PC-9 (cell line): ENCODE measurements at regions of chrX and their contacts with region 1.

Region 1: GRCh38 chrX:130916636-130917422 is 13.8 kb upstream of the ENOX2 start:
- DNase-seq: peak; percentile 17 to 38
- H3K4me3 ChIP-seq: no peak overlapping the region
- H3K27ac ChIP-seq: no peak overlapping the region
- H3K4me1 ChIP-seq: no peaks in the 10 kb centered on the region
- H3K27me3 ChIP-seq: 0 out of 2 replicates have a peak, but pooled peaks cover 6% of the 10 kb centered on the region
- CTCF ChIP-seq: peak; percentile 96

Region 2: DNA sequence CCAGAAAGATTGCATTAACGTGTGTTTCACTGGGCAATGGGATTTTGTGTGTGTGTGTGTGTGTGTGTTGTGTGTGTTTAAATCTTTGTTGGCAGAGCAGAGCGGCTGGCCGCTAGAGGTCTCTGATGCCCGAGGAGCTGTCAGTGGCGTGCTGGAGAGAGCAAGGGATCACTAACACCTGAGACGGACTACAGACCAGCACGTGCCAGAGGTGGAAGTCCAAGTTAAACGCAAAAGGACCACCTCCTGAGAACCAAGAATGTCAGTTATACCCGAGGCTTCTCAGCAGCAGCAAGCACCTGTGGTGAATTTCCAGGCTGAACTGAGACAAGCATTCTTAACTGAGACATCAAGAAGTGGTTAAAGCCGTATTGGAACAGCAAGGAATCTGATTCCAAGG is 586.1 kb before region 1 on chrX:
- CTCF ChIA-PET with region 1: interaction called, 4 read pairs
- POLR2A ChIA-PET with region 1: no interaction called
- intact Hi-C with region 1: loop called (anchors 2 kb)
- DNase-seq: peak; percentile 43 to 48
- H3K4me3 ChIP-seq: peak overlapping the region; percentile 36; the same call in 1 of the 2 replicates
- H3K27ac ChIP-seq: no peak overlapping the region
- H3K4me1 ChIP-seq: peaks cover 14% of the 10 kb centered on the region
- H3K27me3 ChIP-seq: no peaks in the 10 kb centered on the region
- CTCF ChIP-seq: peak; percentile 77

Region 3: DNA sequence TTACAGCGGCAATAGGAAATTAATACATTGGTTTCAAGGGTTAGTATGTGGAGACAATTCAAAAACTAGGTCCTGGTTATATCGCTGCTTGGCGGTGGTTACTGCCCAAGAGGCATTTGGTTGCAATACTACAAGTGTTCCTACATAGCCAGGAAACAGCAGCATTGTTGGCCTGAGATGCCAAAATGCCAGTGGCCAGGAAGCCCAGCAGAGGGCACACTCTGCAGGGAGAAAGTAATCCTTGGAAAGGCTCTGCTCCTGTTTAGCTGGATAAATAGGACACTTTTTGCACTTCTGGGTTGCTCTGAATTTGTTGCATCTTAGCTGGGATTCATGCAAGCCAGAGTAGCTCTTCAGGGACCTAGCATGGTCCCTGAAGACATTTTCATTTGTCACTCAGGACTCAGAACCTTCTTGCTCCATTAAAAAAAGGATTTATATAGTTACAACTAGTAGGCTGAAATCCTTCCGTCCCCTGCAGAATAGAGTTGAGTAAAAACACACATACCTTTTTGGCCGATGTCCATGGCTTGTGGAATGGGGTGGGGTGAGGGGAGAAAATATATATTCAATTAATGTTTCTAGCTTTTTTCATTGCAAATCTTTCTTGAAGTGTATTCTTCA is 523.3 kb before region 1 on chrX:
- CTCF ChIA-PET with region 1: interaction called, 4 read pairs
- POLR2A ChIA-PET with region 1: no interaction called
- intact Hi-C with region 1: loop called (anchors 1 kb)
- DNase-seq: peak; percentile 52 to 61
- H3K4me3 ChIP-seq: no peak overlapping the region
- H3K27ac ChIP-seq: no peak overlapping the region
- H3K4me1 ChIP-seq: no peaks in the 10 kb centered on the region
- H3K27me3 ChIP-seq: peaks cover 24% of the 10 kb centered on the region
- CTCF ChIP-seq: peak; percentile 76

Region 4: DNA sequence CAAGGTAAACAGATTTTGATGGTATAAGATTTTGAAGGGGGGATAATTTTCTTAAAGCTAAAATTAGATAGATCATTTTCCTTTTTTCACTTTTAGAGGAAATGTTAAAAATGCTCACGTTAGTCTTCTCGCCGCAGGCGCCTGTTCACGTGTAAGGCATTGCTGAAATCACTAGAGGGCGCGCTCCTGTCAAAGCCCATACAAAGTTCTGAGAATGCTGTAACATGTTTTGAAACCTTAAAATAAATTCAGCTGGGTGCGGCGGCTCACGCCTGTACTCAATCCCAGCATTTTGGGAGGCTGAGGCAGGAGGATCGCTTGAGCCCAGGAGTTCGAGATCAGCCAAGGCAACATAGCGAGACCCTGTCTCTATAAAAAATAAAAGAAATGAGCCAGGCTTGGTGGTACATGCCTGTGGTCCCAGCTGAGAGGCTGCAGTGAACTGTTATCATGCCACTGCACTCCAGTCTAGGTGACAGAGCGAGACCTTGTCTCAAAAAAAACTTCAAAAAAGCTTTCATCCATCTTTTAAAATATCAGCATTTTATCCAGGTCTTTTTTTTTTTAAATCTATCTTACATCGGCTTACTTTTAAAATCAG is 377.0 kb before region 1 on chrX:
- CTCF ChIA-PET with region 1: no interaction called
- POLR2A ChIA-PET with region 1: no interaction called
- intact Hi-C with region 1: loop called (anchors 1 kb)
- DNase-seq: peak in 1 of 2 experiments; percentile 36
- H3K4me3 ChIP-seq: no peak overlapping the region
- H3K27ac ChIP-seq: no peak overlapping the region
- H3K4me1 ChIP-seq: no peaks in the 10 kb centered on the region
- H3K27me3 ChIP-seq: peaks cover 18% of the 10 kb centered on the region; the same call in 1 of the 2 replicates
- CTCF ChIP-seq: peak; percentile 86

Region 5: GRCh38 chrX:130575831-130576389 is 340.9 kb before region 1 on chrX:
- CTCF ChIA-PET with region 1: interaction called, 10 read pairs
- POLR2A ChIA-PET with region 1: no interaction called
- intact Hi-C with region 1: loop called (anchors 1 kb)
- DNase-seq: peak in 1 of 2 experiments; percentile 20
- H3K4me3 ChIP-seq: no peak overlapping the region
- H3K27ac ChIP-seq: no peak overlapping the region
- H3K4me1 ChIP-seq: no peaks in the 10 kb centered on the region; the same call in 1 of the 2 replicates
- H3K27me3 ChIP-seq: no peaks in the 10 kb centered on the region
- CTCF ChIP-seq: peak; percentile 85